ENCODE measurements at regions of chr11 and their contacts with region 1.

Region 1: GRCh38 chr11:114180301-114181055 is 115.7 kb upstream of the NNMT start:
- DNase-seq: peak in 8 of 35 experiments; percentile 11 to 50 (median 18)
- ATAC-seq: no peak
- H3K4me3 ChIP-seq: no peak overlapping the region
- H3K4me3 Mint-ChIP-seq: peak overlapping the region in 1 of 3 donors; percentile 57
- H3K27ac ChIP-seq: no peak overlapping the region
- H3K27ac Mint-ChIP-seq: peak overlapping the region; percentile 66 to 67
- H3K4me1 ChIP-seq: peaks cover 20 to 57% of the 10 kb centered on the region in 2 experiments
- H3K4me1 Mint-ChIP-seq: peaks cover 77 to 86% (median 81%) of the 10 kb centered on the region in 3 donors
- H3K27me3 ChIP-seq: no peaks in the 10 kb centered on the region
- H3K27me3 Mint-ChIP-seq: no peaks in the 10 kb centered on the region

Region 2: GRCh38 chr11:113994077-113994954 is 186.2 kb before region 1 on chr11:
- CTCF ChIA-PET with region 1: no interaction called
- POLR2A ChIA-PET with region 1: no interaction called
- DNase-seq: peak in 28 of 35 experiments; percentile 4 to 62 (median 26)
- ATAC-seq: peak in 3 of 4 experiments; percentile 41 to 57 (median 44)
- H3K4me3 ChIP-seq: no peak overlapping the region
- H3K4me3 Mint-ChIP-seq: no peak overlapping the region
- H3K27ac ChIP-seq: no peak overlapping the region
- H3K27ac Mint-ChIP-seq: no peak overlapping the region
- H3K4me1 ChIP-seq: no peaks in the 10 kb centered on the region
- H3K4me1 Mint-ChIP-seq: peaks cover 2 to 9% (median 3%) of the 10 kb centered on the region in 3 donors
- H3K27me3 ChIP-seq: peaks cover 0 to 49% of the 10 kb centered on the region in 2 experiments
- H3K27me3 Mint-ChIP-seq: peaks cover 29 to 33% of the 10 kb centered on the region in 2 donors

Region 3: GRCh38 chr11:114073007-114073827 is 107.3 kb before region 1 on chr11:
- CTCF ChIA-PET with region 1: interaction called in 1 of 2 experiments, 11 read pairs
- POLR2A ChIA-PET with region 1: interaction called in 1 of 2 experiments, 3 read pairs
- DNase-seq: peak in 1 of 35 experiments; percentile 18
- ATAC-seq: peak; percentile 26 to 39 (median 30)
- H3K4me3 ChIP-seq: peak overlapping the region in 1 of 2 donors; percentile 6
- H3K4me3 Mint-ChIP-seq: peak overlapping the region in 2 of 3 donors; percentile 21 to 53
- H3K27ac ChIP-seq: peak overlapping the region; percentile 73
- H3K27ac Mint-ChIP-seq: peak overlapping the region; percentile 81 to 84
- H3K4me1 ChIP-seq: peaks cover 15 to 49% of the 10 kb centered on the region in 2 experiments
- H3K4me1 Mint-ChIP-seq: peaks cover 50 to 65% (median 53%) of the 10 kb centered on the region in 3 donors
- H3K27me3 ChIP-seq: no peaks in the 10 kb centered on the region
- H3K27me3 Mint-ChIP-seq: peaks cover 0 to 6% of the 10 kb centered on the region in 2 donors

Region 4: DNA sequence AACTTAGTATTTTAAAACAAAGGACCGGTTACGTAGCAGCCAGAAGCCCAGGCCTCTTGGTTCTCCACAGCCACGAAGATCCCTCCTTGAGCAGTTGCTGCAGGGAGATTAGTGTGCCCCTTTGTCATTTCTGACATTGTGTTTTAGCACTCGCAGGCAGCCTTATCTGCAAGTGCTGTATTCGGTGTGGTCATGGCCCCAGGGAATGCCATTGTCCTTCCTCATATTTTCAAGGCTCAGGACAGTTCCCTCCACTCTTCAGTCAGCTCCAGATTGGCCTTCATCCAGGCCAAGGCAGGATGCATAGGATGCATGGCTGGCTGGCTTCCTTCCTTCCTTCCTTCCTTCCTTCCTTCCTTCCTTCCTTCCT is 32.5 kb before region 1 on chr11:
- CTCF ChIA-PET with region 1: no interaction called
- POLR2A ChIA-PET with region 1: no interaction called
- DNase-seq: no peak
- ATAC-seq: peak in 1 of 4 experiments; percentile 39
- H3K4me3 ChIP-seq: no peak overlapping the region
- H3K4me3 Mint-ChIP-seq: no peak overlapping the region
- H3K27ac ChIP-seq: no peak overlapping the region
- H3K27ac Mint-ChIP-seq: peak overlapping the region in 1 of 2 donors; percentile 81
- H3K4me1 ChIP-seq: peaks cover 0 to 3% of the 10 kb centered on the region in 2 experiments
- H3K4me1 Mint-ChIP-seq: peaks cover 38 to 60% (median 49%) of the 10 kb centered on the region in 3 donors
- H3K27me3 ChIP-seq: no peaks in the 10 kb centered on the region
- H3K27me3 Mint-ChIP-seq: no peaks in the 10 kb centered on the region

Measured in T-cell (primary cell).